A549 (cell line): ENCODE measurements at regions of chr20 and their contacts with region 1.

Region 1: GRCh38 chr20:63009045-63009961 is 2.5 kb upstream of the BHLHE23 start:
- DNase-seq: peak; percentile 67 to 95
- ATAC-seq: peak; percentile 79 to 90
- H3K4me3 ChIP-seq: no peak overlapping the region
- H3K27ac ChIP-seq: peak overlapping the region in 1 of 2 experiments; percentile 44; a peak in 1 of 6 replicates
- H3K4me1 ChIP-seq: peaks cover 14% of the 10 kb centered on the region; the same call in 2 of the 3 replicates
- CTCF ChIP-seq: peak; percentile 87
- EP300 ChIP-seq: no peak
- POLR2A ChIP-seq: no peak
- RAD21 ChIP-seq: peak; percentile 94 to 95

Region 2: GRCh38 chr20:61980700-61981583 is 1028.4 kb before region 1 on chr20:
- CTCF ChIA-PET with region 1: no interaction called
- POLR2A ChIA-PET with region 1: no interaction called
- DNase-seq: peak; percentile 49 to 65
- ATAC-seq: peak; percentile 64 to 91; a peak in 4 of 6 replicates
- H3K4me3 ChIP-seq: no peak overlapping the region
- H3K27ac ChIP-seq: no peak overlapping the region
- H3K4me1 ChIP-seq: no peaks in the 10 kb centered on the region
- CTCF ChIP-seq: peak; percentile 50
- EP300 ChIP-seq: no peak
- POLR2A ChIP-seq: no peak
- RAD21 ChIP-seq: peak; percentile 65 to 77

Region 3: GRCh38 chr20:62822788-62823651 is 186.3 kb before region 1 on chr20:
- CTCF ChIA-PET with region 1: interaction called, 14 read pairs
- POLR2A ChIA-PET with region 1: no interaction called
- DNase-seq: peak; percentile 88 to 92
- ATAC-seq: peak; percentile 51 to 65; a peak in 5 of 6 replicates
- H3K4me3 ChIP-seq: no peak overlapping the region
- H3K27ac ChIP-seq: peak overlapping the region in 1 of 2 experiments; percentile 41; a peak in 3 of 6 replicates
- H3K4me1 ChIP-seq: peaks cover 48% of the 10 kb centered on the region
- CTCF ChIP-seq: peak; percentile 62
- EP300 ChIP-seq: no peak
- POLR2A ChIP-seq: no peak
- RAD21 ChIP-seq: peak; percentile 75 to 85

Region 4: DNA sequence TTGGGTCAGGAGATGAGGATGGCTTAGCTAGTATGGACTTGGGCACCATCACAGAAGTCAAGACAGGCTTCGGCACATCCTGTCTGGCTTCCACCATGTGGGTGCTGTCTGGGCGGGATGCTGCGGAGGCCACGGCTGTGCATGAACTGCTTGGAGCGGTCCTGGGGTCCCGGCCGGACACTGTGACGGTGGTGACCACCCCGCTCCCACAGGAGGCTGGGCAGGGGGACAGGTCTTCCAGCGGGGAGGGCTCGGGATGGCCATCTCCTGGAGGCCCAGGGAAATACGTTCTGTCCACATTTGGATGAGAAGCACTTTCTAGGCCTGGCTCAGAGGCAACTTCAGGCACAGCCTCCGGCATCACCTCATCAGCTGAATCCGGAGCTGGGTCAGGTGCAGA is 115.6 kb before region 1 on chr20:
- CTCF ChIA-PET with region 1: interaction called, 33 read pairs
- POLR2A ChIA-PET with region 1: no interaction called
- DNase-seq: peak in 1 of 2 experiments; percentile 31
- ATAC-seq: peak; percentile 45 to 62; a peak in 4 of 6 replicates
- H3K4me3 ChIP-seq: no peak overlapping the region
- H3K27ac ChIP-seq: no peak overlapping the region
- H3K4me1 ChIP-seq: no peaks in the 10 kb centered on the region
- CTCF ChIP-seq: no peak
- EP300 ChIP-seq: no peak
- POLR2A ChIP-seq: no peak
- RAD21 ChIP-seq: no peak

Region 5: GRCh38 chr20:62907384-62908317 is 101.7 kb before region 1 on chr20:
- CTCF ChIA-PET with region 1: interaction called, 16 read pairs
- POLR2A ChIA-PET with region 1: no interaction called
- DNase-seq: no peak
- ATAC-seq: peak in 1 of 2 experiments; percentile 74; a peak in 3 of 6 replicates
- H3K4me3 ChIP-seq: no peak overlapping the region
- H3K27ac ChIP-seq: no peak overlapping the region
- H3K4me1 ChIP-seq: no peaks in the 10 kb centered on the region
- CTCF ChIP-seq: peak; percentile 43
- EP300 ChIP-seq: no peak
- POLR2A ChIP-seq: no peak
- RAD21 ChIP-seq: no peak

Region 6: DNA sequence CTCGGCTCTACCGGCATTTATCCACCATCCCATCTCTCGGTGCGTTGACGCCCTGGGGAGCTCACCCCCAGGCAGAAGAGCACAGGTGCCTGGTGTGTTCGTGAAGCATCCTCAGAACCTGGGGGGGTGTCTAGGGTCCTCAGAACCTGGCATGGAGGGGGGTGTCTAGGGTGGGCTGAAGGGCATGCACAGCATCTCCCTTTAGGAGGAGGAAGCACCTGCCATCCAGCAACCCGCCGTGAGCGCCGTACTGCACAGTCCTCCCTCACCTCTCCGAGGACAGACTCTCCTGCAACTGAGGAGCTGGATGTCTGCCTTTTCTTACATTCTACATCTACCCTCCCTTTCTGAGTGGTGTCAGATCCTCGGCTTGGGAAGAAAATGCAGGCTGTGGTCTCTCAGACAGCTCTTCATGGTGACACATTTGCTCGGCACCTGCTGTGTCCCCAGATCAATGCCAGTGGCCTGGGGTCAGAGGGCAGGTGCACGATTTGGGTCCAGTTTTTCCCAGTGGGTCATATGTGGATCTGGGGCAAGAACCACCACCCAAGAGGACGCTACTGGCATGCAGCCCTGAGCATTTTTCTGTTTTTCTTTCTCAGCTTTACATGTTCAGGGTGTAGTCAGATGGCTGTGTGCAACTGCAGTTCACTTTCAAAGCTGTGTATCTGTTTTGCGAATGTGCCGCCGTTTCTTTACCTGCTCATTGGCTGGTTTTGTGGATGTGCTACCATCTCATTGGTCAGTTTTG is 37.5 kb after region 1 on chr20:
- CTCF ChIA-PET with region 1: no interaction called
- POLR2A ChIA-PET with region 1: no interaction called
- DNase-seq: no peak
- ATAC-seq: no peak
- H3K4me3 ChIP-seq: no peak overlapping the region
- H3K27ac ChIP-seq: no peak overlapping the region
- H3K4me1 ChIP-seq: no peaks in the 10 kb centered on the region
- CTCF ChIP-seq: no peak
- EP300 ChIP-seq: no peak
- POLR2A ChIP-seq: no peak
- RAD21 ChIP-seq: no peak

Region 7: DNA sequence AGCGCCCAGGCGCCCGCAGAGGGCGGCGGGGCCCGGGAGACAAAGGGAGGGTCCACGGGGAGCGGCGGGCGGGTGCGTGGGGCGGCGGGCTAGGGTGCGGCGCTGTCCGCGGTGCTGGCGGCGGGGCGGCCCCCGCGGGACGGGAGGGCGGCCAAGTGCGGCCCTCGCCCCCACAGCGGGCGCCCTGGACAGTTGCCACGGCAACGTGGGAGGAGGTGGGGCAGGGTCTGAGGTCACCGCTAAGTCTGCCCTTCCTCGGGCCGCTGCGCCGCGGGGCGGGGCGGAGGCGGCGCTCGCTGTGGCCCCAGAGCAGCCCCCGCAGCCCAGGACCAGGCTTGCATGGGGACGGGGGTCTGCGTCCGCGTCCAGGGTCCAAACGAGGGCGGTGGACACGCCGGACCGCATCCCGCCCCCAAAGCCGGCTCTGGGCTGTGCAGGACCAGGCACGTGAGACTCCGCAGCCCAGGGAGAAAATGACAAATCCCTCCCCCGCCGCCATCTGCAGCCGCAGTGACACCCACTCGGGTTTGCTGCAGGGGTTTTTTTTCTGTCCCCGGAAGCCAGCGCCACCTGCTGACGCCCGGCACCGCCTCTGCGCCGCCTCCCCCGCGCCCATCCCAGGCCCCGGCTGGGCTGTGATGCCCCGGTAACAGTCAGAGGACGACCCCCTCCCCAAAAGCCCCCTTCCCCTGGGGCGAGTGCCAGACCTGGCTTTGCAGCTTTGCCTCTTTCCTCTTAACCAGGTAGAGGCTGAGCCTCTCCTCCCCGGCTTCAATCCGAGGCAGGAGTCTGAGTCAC is 169.8 kb after region 1 on chr20:
- CTCF ChIA-PET with region 1: interaction called, 11 read pairs
- POLR2A ChIA-PET with region 1: no interaction called
- DNase-seq: peak in 1 of 2 experiments; percentile 49
- ATAC-seq: peak in 1 of 2 experiments; percentile 8; a peak in 1 of 6 replicates
- H3K4me3 ChIP-seq: peak overlapping the region; percentile 47
- H3K27ac ChIP-seq: peak overlapping the region in 1 of 2 experiments; percentile 38; a peak in 2 of 6 replicates
- H3K4me1 ChIP-seq: peaks cover 46% of the 10 kb centered on the region
- CTCF ChIP-seq: peak; percentile 60
- EP300 ChIP-seq: no peak
- POLR2A ChIP-seq: no peak
- RAD21 ChIP-seq: peak; percentile 52 to 59

Region 8: GRCh38 chr20:63351811-63352591 is 342.7 kb after region 1 on chr20:
- CTCF ChIA-PET with region 1: no interaction called
- POLR2A ChIA-PET with region 1: no interaction called
- DNase-seq: no peak
- ATAC-seq: peak in 1 of 2 experiments; percentile 40; a peak in 3 of 6 replicates
- H3K4me3 ChIP-seq: no peak overlapping the region
- H3K27ac ChIP-seq: no peak overlapping the region
- H3K4me1 ChIP-seq: no peaks in the 10 kb centered on the region
- CTCF ChIP-seq: no peak
- EP300 ChIP-seq: no peak
- POLR2A ChIP-seq: no peak
- RAD21 ChIP-seq: no peak